ENCODE measurements at regions of chr15 and their contacts with region 1.

Region 1: DNA sequence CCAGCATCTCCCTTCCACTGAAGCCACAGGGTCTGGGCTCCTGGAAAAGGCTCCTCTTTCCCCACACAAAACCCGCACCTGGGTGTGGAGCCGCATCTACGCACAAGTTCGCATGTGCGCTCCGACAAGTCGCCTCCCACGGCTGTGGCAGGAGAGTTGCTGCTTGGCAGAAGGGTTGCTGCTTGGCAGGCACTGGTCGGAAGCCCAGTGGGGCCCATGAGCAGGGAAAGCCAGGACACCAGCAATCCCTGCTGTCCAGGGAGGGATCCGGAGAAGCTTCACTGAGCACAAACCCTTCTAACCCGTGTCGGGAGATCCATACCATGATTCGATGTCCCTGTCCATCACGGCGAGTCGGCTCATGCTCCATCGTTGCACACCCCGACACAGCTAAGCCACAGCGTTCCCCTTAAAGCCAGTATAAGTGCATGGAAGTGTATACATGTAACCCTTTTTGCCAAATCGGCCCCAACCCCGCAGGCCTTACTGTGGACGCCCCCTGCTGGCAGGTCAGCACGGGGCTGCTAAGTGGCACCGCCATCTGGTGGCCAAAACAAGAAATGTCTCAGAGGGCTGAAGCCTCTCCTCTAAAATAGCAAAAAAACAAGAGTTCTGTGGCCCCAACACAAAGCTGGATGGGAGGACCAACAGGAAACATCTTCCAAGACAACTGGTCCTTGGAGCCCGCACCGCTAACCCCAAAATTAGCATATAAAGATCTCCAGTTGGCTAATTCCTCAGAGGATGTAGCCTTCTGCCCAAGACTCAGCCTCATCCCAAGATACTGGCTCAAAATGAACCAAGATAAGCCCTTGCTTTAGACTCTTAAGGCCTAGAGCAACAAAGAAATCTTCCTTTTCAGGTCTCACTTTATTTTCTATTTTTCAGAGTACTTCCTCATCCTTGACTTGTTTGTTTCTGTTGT is 8.3 kb downstream of the ANKRD63 start:
- ATAC-seq: peak; percentile 27 to 66 (median 49)
- H3K4me3 ChIP-seq: no peak overlapping the region
- H3K27ac ChIP-seq: no peak overlapping the region
- H3K4me1 ChIP-seq: peaks cover 2% of the 10 kb centered on the region in 2 donors

Region 2: DNA sequence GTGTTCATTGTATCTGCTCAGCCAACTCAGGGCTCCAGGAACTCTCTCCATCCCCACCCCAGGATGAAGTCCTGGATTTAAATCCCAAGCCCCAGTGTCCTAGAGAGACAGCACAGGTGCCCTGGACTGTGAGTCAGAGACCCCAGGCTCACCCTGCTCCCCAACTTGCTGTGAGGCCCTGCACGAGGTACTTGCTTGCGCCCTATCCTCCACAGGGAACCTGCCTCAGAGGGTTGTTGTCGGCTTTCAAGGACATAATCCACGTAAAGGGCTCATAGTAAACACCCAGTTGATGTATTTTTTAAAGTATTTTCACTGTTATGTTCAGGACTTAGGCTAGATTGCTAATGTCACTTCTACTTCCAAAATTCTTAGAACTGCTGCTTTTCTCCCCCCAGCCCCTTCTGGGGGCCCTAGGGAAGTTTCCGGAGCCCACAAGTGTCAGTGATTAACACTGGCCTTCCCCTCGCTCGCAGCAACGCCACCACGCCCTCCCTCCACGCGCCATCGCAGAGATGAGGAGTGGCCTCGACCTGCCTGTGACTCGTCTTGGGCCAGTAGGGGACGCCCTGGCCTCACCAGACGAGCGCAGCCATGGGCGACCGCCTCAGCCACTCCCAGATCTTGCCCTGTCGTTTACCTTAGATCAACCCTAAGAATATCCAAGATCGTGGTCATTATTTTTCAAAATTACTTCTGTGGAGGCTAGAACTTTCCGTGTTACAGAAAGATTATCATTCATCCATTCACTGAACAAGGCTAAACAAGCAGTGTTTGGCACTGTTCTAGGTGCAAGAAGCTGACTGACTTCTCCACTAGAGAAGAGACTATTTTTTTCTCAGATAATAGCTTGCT is 229.7 kb before region 1 on chr15:
- in situ Hi-C with region 1: loop called in 1 of 9 experiments (anchors 10 kb)
- ATAC-seq: peak; percentile 80 to 99 (median 96)
- H3K4me3 ChIP-seq: peak overlapping the region in 1 of 5 donors; percentile 10
- H3K27ac ChIP-seq: no peak overlapping the region
- H3K4me1 ChIP-seq: peaks cover 19% of the 10 kb centered on the region in 2 donors

Region 3: GRCh38 chr15:40217159-40217824 is 57.3 kb before region 1 on chr15:
- in situ Hi-C with region 1: loop called in 5 of 9 experiments (anchors 5 to 10 kb)
- ATAC-seq: peak; percentile 80 to 98 (median 92)
- H3K4me3 ChIP-seq: peak overlapping the region in 2 of 5 donors; percentile 16 to 23
- H3K27ac ChIP-seq: no peak overlapping the region
- H3K4me1 ChIP-seq: no peaks in the 10 kb centered on the region

Measured in motor neuron (in vitro differentiated cells).